Dendritic cell treated with granulocyte-macrophage colony-stimulating factor and Interleukin-4, amounts not matched to agents 40 ng/mL and 50 ng/mL, for 4 days (primary cell): ENCODE measurements at regions of chr13 and their contacts with region 1.

Region 1: DNA sequence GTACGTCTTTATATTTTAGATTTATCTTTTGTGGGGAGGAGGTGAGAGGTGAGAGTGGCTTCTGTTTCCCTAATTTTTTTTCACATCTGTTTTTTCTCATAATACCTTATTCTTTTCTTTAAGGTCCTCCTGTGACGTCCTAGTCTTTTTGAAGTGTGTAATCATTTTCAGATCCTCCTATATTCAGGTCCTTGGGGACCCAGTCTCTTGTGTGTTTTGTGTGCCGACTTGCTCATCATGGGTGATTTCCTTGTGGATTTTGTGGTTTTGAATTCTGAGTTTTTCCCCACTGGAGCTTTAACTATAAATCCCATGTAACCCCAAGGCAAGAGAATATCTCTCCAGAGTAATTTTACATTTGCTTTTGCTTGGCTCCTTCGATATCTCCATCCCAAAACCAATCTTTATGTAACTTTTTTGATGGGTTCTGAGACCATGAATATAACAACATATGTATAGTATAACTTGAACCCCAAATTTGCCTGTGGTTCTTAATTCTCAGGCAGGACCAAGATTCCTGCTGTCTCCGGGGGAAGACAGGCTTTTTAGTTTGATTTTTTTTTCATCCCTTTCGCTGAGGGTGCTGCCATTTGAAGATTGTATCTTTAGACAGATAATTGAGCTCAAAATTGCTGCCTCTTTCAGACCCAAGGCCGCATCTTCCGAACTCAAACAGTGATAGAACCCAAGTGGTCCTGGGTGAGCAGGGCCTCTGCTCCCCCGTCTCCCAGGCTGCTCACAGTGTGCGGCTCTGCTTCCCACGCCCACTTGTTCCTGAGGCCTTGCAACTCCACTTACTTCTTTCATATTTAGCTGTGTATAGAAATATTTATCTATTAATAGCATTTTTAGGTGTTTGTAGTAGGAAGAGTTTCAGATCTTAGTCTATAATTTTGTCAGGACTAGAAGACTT is 59.1 kb upstream of the GPR183 start:
- H3K4me3 Mint-ChIP-seq: no peak overlapping the region
- H3K27ac Mint-ChIP-seq: peak overlapping the region; percentile 55
- H3K4me1 Mint-ChIP-seq: peaks cover 52% of the 10 kb centered on the region
- H3K27me3 Mint-ChIP-seq: no peaks in the 10 kb centered on the region

Region 2: GRCh38 chr13:99176309-99177276 is 189.7 kb before region 1 on chr13:
- intact Hi-C with region 1: loop called (anchors 10 kb)
- H3K4me3 Mint-ChIP-seq: peak overlapping the region; percentile 33
- H3K27ac Mint-ChIP-seq: no peak overlapping the region
- H3K4me1 Mint-ChIP-seq: peaks cover 46% of the 10 kb centered on the region
- H3K27me3 Mint-ChIP-seq: peaks cover 49% of the 10 kb centered on the region

Region 3: GRCh38 chr13:100129605-100130004 is 763.3 kb after region 1 on chr13:
- intact Hi-C with region 1: no loop called
- H3K4me3 Mint-ChIP-seq: no peak overlapping the region
- H3K27ac Mint-ChIP-seq: peak overlapping the region; percentile 48
- H3K4me1 Mint-ChIP-seq: peaks cover 29% of the 10 kb centered on the region
- H3K27me3 Mint-ChIP-seq: no peaks in the 10 kb centered on the region